Activated CD4-positive, alpha-beta memory T cell treated with anti-CD3 and anti-CD28 coated beads for 36 hours (primary cell): ENCODE measurements at regions of chr14 and their contacts with region 1.

Region 1: GRCh38 chr14:54881235-54881760 is 21.3 kb downstream of the GCH1 start:
- DNase-seq: peak; percentile 34
- H3K4me3 Mint-ChIP-seq: peak overlapping the region; percentile 82
- H3K27ac Mint-ChIP-seq: peak overlapping the region; percentile 94
- H3K4me1 Mint-ChIP-seq: peaks cover 46% of the 10 kb centered on the region
- H3K27me3 Mint-ChIP-seq: no peaks in the 10 kb centered on the region

Region 2: DNA sequence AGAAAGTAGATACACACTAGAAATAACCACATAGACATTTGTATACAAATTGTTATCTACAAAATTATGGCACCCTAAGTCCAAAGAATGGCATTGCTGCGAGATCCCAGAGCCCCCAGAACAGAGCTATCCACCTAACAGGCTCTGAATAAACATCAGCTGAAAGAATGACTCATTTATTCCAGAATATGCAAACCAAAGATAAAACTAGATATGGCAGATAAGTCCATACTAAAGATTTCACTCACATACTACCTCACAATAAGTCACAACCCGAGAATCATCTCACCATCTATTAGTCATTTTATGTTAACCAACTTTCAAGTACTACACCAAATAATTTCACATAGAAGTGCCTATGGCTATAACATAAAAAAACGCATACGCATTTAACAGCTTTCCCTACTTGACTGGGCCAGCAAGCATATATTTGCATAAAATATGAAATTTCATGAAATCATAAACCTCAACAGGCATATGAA is 445.8 kb before region 1 on chr14:
- CTCF ChIA-PET with region 1: no interaction called
- POLR2A ChIA-PET with region 1: no interaction called
- intact Hi-C with region 1: loop called (anchors 5 kb)
- DNase-seq: peak; percentile 40
- H3K4me3 Mint-ChIP-seq: peak overlapping the region; percentile 61
- H3K27ac Mint-ChIP-seq: peak overlapping the region; percentile 76
- H3K4me1 Mint-ChIP-seq: peaks cover 82% of the 10 kb centered on the region
- H3K27me3 Mint-ChIP-seq: no peaks in the 10 kb centered on the region

Region 3: GRCh38 chr14:54893151-54893760 is 12.0 kb after region 1 on chr14:
- CTCF ChIA-PET with region 1: interaction called, 4 read pairs
- POLR2A ChIA-PET with region 1: no interaction called
- intact Hi-C with region 1: loop called (anchors 1 kb)
- DNase-seq: peak; percentile 53
- H3K4me3 Mint-ChIP-seq: no peak overlapping the region
- H3K27ac Mint-ChIP-seq: no peak overlapping the region
- H3K4me1 Mint-ChIP-seq: peaks cover 55% of the 10 kb centered on the region
- H3K27me3 Mint-ChIP-seq: no peaks in the 10 kb centered on the region

Region 4: DNA sequence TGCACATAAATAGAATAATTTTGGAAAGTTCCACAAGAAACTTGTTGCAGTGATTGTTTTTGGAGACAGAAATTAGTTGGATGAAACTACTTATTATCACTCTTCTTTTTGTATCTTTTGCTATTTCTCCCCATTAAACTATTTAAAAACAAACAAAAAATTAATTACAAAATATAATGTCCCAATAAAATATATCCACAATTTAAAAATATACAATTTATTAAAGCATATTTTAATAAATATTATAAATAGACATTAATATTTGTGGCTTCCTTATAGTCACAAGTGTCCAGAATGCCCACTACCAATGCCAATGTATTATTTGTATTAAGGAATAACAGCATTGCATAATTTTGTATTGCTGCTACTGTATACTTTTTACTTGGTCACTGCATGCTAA is 73.8 kb after region 1 on chr14:
- CTCF ChIA-PET with region 1: no interaction called
- POLR2A ChIA-PET with region 1: no interaction called
- intact Hi-C with region 1: no loop called
- DNase-seq: no peak
- H3K4me3 Mint-ChIP-seq: no peak overlapping the region
- H3K27ac Mint-ChIP-seq: no peak overlapping the region
- H3K4me1 Mint-ChIP-seq: no peaks in the 10 kb centered on the region
- H3K27me3 Mint-ChIP-seq: no peaks in the 10 kb centered on the region

Region 5: GRCh38 chr14:54981698-54982097 is 100.4 kb after region 1 on chr14:
- CTCF ChIA-PET with region 1: no interaction called
- POLR2A ChIA-PET with region 1: no interaction called
- intact Hi-C with region 1: no loop called
- DNase-seq: no peak
- H3K4me3 Mint-ChIP-seq: no peak overlapping the region
- H3K27ac Mint-ChIP-seq: no peak overlapping the region
- H3K4me1 Mint-ChIP-seq: no peaks in the 10 kb centered on the region
- H3K27me3 Mint-ChIP-seq: no peaks in the 10 kb centered on the region

Region 6: DNA sequence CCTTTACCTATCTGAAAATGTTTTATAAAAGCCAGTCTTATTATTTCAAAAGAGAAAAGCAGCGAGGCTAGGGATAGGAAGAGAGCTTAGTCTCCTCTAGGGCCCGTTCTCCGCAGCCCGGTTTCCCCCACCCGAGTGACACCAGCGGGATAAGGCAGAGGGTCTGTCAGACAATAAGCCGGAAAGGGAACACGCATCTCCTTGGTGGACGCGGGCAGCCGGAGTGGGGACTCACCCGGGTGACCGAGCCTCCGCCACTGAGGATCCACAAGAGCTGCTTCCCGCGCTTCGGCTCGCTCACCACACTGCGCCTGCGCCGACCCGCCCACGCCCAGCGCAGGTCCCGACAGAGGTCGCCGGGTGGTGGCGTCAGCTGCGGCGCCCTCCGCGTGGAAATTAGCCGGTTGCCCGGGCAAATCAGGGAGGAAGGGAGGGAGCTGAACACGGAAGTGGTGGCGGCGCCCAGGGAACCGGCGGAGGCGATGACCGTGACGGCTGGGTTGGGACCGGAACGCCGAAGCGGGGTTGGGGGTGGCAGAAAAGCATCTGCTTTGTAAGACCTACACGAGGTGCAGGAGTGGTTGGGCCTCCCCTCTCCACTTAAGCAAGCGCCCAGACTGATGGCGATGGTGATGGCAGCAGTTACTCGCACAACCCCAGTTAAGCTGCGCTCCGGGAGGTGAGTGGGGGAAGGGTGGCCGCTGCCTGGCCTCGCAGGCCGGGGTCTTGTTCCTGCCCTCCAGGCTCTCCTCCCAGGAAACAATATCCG is 145.7 kb after region 1 on chr14 and contains the starts of genes SOCS4 and WDHD1:
- CTCF ChIA-PET with region 1: no interaction called
- POLR2A ChIA-PET with region 1: no interaction called
- intact Hi-C with region 1: loop called (anchors 2 kb)
- DNase-seq: peak; percentile 98
- H3K4me3 Mint-ChIP-seq: peak within 1 kb of the TSS; percentile 93
- H3K27ac Mint-ChIP-seq: peak within 1 kb of the TSS; percentile 89
- H3K4me1 Mint-ChIP-seq: peaks cover 44% of the 10 kb centered on the region
- H3K27me3 Mint-ChIP-seq: no peaks in the 10 kb centered on the region
- total RNA-seq, gene SOCS4: 24.4 to 25.3 TPM
- total RNA-seq, gene WDHD1: 62.4 to 63.2 TPM